ENCODE measurements at regions of chr9 and their contacts with region 1.

Region 1: GRCh38 chr9:68704814-68705530 is at the start of gene PIP5K1B:
- DNase-seq: peak; percentile 28 to 80
- H3K4me3 ChIP-seq: peak within 1 kb of the TSS; percentile 66 to 71
- H3K27ac ChIP-seq: peak within 1 kb of the TSS; percentile 75 to 78
- H3K4me1 ChIP-seq: peaks cover 0 to 28% (median 18%) of the 10 kb centered on the region in 4 donors
- H3K27me3 ChIP-seq: no peaks in the 10 kb centered on the region
- CTCF ChIP-seq: peak in 1 of 2 experiments; percentile 11

Region 2: GRCh38 chr9:68640421-68641089 is 64.4 kb before region 1 on chr9:
- intact Hi-C with region 1: no loop called
- DNase-seq: no peak
- H3K4me3 ChIP-seq: no peak overlapping the region
- H3K27ac ChIP-seq: no peak overlapping the region
- H3K4me1 ChIP-seq: no peaks in the 10 kb centered on the region
- H3K27me3 ChIP-seq: no peaks in the 10 kb centered on the region
- CTCF ChIP-seq: no peak

Region 3: DNA sequence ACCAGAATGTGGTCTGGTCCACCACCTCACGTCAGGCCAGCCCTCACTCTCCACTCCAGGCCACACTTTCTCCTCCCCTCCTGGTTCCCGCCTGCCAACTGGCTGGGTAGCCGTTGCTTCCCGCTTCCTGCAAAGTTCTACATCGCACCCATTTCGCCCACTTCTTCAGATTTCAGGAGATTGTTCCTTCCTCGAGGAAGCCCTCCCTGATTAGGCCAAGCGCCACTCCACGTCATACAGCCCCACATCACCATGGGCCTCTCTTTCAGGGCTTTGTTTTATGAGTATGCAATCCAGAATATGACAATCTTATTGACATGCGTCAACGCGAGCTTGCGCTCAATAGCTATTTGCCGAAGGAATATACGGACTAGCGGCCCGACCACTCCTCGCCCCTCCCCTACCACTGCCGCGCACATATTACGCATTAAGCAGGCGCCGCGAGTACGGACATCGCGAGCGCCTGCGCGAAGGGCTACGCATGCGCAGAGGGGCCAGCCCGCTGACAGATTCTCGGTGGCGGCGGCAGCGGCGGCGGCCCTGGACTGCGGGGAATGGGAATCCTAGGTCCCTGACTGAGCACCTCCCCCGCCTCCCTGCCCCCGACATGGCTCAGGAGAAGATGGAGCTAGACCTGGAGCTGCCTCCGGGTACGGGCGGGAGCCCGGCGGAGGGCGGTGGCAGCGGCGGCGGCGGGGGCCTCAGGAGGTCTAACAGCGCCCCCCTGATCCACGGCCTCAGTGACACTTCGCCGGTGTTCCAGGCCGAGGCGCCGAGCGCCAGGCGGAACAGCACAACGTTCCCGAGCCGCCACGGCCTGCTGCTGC is 74.8 kb after region 1 on chr9:
- intact Hi-C with region 1: loop called (anchors 10 kb)
- DNase-seq: peak; percentile 92 to 96
- H3K4me3 ChIP-seq: peak overlapping the region; percentile 75 to 78
- H3K27ac ChIP-seq: peak overlapping the region; percentile 91 to 95
- H3K4me1 ChIP-seq: peaks cover 0 to 73% (median 32%) of the 10 kb centered on the region in 4 donors
- H3K27me3 ChIP-seq: no peaks in the 10 kb centered on the region
- CTCF ChIP-seq: peak; percentile 16 to 26

Region 4: DNA sequence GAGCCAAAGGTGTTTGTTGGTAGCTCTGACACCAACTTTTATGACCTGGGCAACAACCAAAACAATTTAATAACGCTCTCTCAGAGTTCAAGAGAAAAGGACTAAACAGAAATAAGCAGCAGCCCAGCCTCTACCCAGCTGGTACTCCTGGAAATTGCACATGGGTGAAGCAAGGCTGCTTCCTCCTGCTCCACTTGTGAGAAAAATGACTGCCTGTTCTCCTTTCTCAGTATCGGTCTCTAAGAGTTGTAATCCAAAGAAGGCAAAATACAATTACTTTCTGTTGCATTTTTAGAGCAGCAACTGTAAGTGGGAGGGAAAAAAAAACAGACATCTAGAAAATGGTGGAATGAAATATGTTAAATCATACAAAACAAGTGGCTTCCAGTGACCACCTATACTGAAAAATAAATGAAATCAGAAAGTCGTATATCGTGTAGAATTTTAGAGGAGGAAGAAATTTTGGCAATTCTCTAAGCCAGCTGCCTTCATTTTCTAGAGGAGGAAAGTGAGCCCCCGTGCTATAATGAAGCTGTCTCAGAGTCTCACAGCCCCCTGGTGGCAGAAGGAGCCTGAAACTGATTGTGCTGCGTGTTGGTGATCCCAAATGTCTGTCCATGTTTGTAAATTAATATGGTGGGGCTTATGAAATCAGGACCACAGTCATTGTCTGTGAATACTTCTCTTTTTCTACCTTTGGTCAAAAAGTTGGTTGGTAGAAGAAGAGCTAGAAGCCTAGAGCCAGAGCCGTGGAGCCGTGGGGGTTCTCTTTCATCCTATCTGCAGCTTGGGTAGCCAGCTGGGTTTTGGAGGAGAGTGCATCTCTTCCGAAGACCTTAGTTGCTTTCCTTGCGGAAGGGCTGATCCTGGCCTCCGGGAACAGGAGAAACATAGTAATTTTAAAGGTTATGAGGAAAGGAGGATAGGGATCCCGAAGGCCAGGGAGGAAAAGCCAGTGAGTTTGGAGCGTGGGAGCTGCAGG is 139.9 kb after region 1 on chr9:
- intact Hi-C with region 1: no loop called
- DNase-seq: peak in 1 of 2 donors; percentile 36
- H3K4me3 ChIP-seq: no peak overlapping the region
- H3K27ac ChIP-seq: no peak overlapping the region
- H3K4me1 ChIP-seq: peaks cover 0 to 36% (median 10%) of the 10 kb centered on the region in 4 donors
- H3K27me3 ChIP-seq: no peaks in the 10 kb centered on the region
- CTCF ChIP-seq: peak; percentile 53 to 56